Colonic mucosa (tissue), 4 donors: ENCODE measurements at regions of chr11 and their contacts with region 1.

Region 1: DNA sequence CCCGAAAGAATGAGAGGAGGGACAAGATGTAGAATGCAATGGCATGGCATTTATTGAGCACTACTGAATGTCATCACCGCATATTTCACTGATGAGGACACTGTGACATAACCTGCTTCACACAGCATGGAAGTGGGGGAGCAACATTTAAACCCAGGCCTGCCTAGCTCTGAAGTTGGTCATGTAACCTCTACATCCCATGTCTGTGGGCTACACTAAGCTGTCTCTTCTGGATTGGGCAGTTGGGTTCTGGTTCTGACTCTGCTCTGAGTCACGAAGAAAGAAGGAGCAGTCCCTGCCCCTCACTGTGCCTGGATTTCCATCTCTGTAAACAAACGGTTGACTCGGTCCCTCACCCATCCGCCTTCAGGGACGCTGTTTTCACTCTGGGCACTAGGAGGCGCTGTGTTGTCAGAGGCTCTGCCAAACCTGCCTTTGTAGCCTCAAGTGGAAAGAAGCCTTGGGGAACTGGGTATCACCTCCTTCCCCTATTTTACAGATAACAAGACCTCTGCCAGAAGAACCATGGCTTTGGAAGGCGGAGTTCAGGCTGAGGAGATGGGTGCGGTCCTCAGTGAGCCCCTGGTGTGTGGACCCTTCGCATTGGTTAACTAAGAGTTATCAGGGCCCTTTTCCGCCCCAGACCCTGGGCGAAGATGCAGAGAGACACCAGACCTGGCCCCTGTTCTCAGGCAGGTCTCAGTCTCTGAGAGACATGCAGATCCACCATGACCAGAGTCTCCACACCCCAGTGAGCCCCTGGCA is 12.7 kb upstream of the ARHGEF17 start:
- DNase-seq: peak; percentile 78
- H3K4me3 ChIP-seq: no peak overlapping the region
- H3K27ac ChIP-seq: no peak overlapping the region
- H3K4me1 ChIP-seq: no peaks in the 10 kb centered on the region
- H3K27me3 ChIP-seq: no peaks in the 10 kb centered on the region
- CTCF ChIP-seq: peak; percentile 85

Region 2: DNA sequence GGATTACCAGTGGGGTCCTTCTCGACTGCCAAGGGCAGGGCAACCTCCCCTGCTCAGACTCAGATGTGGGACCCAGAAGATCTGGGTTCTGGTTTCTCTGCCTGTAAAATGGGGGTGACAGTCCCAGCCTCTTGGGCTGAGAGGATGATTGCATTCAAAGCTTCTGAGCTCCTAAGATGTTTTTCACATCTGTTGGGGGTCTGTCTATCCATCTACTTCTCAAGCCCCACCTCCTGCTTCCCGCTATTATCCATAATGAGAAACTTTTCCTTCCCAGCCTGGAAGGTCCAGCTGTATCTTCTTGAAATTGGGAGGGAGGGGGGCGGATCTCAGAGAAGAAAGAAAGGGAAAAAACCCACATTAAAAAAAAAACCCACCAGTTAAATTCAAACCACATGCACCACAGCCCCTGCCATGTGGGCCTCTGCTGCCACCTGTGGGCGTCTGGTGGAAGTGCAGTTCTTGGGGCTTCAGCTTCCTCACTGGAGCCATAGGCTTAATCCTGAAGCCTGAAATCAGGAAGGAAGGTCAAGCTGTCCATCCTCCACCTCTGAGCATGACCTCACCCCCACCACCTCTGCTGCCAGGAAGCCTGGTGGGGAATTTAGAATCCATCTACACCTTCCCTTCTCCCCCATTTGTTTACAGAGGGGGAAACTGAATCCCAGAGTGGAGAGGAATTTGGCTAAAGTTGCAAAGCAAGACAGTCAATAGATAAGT is 40.0 kb after region 1 on chr11:
- intact Hi-C with region 1: loop called (anchors 5 kb)
- DNase-seq: peak; percentile 90
- H3K4me3 ChIP-seq: no peak overlapping the region
- H3K27ac ChIP-seq: peak overlapping the region; percentile 65
- H3K4me1 ChIP-seq: no peaks in the 10 kb centered on the region
- H3K27me3 ChIP-seq: no peaks in the 10 kb centered on the region
- CTCF ChIP-seq: peak; percentile 99

Region 3: GRCh38 chr11:73383249-73384124 is 88.1 kb after region 1 on chr11:
- intact Hi-C with region 1: no loop called
- DNase-seq: peak; percentile 43
- H3K4me3 ChIP-seq: no peak overlapping the region
- H3K27ac ChIP-seq: peak overlapping the region; percentile 67
- H3K4me1 ChIP-seq: no peaks in the 10 kb centered on the region
- H3K27me3 ChIP-seq: no peaks in the 10 kb centered on the region
- CTCF ChIP-seq: no peak

Region 4: DNA sequence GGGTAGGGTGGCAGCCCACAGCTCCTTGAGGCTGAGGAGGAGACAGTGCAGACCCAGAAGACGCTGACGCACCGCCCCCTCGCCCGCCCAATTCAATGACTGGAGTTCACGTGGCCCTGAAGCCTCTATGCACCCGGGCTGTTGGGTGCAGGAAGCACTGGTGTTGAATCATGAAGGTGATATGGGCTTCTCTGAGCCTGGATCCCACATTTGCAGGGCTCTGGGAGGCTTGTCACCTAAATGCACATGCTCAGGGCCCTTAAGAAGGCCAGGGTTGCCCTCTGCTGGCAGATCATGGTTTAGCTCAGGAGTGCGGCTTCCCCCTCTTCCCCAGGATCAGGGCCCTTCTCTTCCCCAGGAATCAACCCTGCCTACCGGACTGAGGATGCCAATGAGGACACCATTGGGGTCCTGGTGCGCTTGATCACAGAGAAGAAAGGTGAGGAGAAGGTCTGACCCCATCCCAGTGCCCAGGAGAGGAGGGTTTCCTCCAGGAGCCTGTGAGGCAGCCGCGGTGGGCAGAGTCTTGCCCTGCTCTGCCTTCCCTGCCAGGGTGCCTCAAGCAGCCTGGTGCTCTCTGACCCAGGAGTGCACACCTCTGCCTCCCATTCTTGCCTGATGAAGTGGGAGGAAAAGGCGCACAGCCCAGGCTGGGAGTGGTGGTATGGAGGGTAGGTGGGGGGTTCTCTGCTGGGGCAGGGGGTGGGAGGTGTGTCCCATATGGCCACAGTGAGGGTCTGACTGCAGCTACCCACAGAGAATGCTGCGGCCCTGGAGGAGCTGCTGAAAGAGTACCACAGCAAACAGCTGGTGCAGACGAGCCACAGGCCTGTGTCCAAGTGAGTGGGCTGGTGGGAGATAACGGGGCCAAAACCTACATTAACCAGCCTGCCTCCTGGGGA is 98.3 kb after region 1 on chr11:
- intact Hi-C with region 1: loop called (anchors 10 kb)
- DNase-seq: peak; percentile 73
- H3K4me3 ChIP-seq: no peak overlapping the region
- H3K27ac ChIP-seq: no peak overlapping the region
- H3K4me1 ChIP-seq: no peaks in the 10 kb centered on the region
- H3K27me3 ChIP-seq: no peaks in the 10 kb centered on the region
- CTCF ChIP-seq: peak; percentile 65